ENCODE measurements at regions of chr3 and their contacts with region 1.

Region 1: DNA sequence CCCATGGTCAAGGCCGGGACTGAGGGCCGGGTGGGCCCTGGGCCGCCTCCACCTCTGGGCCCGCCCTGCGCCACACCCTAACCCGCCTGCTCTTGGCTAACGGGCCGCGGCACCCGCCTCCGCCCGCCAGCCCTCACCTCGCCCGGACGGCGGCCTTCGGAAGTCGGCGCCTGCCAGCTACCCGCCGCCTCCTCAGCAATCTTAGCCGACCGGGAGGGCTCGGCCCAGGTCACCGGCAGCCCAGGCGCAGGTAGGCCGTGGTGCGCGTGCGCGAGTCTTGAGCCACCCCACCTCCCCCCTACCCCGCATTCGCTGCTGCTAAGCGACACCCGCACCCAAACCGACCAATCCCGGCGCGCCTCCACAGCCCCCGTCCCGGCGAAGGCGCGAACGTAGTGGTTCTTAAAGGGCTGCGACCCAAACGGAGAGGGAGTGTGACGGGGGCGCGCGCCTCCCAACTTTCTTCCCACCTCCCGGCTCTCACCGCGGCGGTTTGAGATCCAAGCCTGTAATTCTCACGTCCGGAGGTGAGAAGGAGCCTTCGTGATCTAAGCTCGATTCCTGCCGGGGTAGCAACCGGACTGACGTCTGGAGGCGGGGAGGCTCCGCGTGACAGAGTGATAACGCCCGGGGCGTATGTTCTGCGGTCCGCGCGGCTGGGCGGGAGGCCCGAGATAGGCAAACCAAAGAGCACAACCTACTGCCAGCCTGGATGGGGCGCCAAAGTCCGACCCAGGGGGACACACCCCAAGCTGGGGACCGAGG is at the start of gene SEC22C:
- DNase-seq: peak; percentile 97
- ATAC-seq: peak; percentile 94
- H3K4me3 Mint-ChIP-seq: peak within 1 kb of the TSS; percentile 90
- H3K27ac Mint-ChIP-seq: peak within 1 kb of the TSS; percentile 96
- H3K4me1 Mint-ChIP-seq: peaks cover 48% of the 10 kb centered on the region
- H3K27me3 Mint-ChIP-seq: no peaks in the 10 kb centered on the region
- CTCF ChIP-seq: no peak
- total RNA-seq, gene SEC22C: 35.0 to 35.7 TPM

Region 2: GRCh38 chr3:42600111-42600988 is 18.5 kb after region 1 on chr3 and contains the start of gene NKTR:
- CTCF ChIA-PET with region 1: interaction called, 8 read pairs
- POLR2A ChIA-PET with region 1: interaction called, 46 read pairs
- intact Hi-C with region 1: no loop called
- DNase-seq: peak; percentile 99
- ATAC-seq: peak; percentile 88
- H3K4me3 Mint-ChIP-seq: peak within 1 kb of the TSS; percentile 88
- H3K27ac Mint-ChIP-seq: peak within 1 kb of the TSS; percentile 99
- H3K4me1 Mint-ChIP-seq: peaks cover 28% of the 10 kb centered on the region
- H3K27me3 Mint-ChIP-seq: no peaks in the 10 kb centered on the region
- CTCF ChIP-seq: no peak
- total RNA-seq, gene NKTR: 63.4 to 65.9 TPM

Region 3: GRCh38 chr3:42613462-42613861 is 31.6 kb after region 1 on chr3:
- CTCF ChIA-PET with region 1: interaction called, 31 read pairs
- POLR2A ChIA-PET with region 1: no interaction called
- intact Hi-C with region 1: no loop called
- DNase-seq: no peak
- ATAC-seq: no peak
- H3K4me3 Mint-ChIP-seq: no peak overlapping the region
- H3K27ac Mint-ChIP-seq: peak overlapping the region; percentile 8
- H3K4me1 Mint-ChIP-seq: peaks cover 55% of the 10 kb centered on the region
- H3K27me3 Mint-ChIP-seq: no peaks in the 10 kb centered on the region
- CTCF ChIP-seq: peak; percentile 30

Region 4: DNA sequence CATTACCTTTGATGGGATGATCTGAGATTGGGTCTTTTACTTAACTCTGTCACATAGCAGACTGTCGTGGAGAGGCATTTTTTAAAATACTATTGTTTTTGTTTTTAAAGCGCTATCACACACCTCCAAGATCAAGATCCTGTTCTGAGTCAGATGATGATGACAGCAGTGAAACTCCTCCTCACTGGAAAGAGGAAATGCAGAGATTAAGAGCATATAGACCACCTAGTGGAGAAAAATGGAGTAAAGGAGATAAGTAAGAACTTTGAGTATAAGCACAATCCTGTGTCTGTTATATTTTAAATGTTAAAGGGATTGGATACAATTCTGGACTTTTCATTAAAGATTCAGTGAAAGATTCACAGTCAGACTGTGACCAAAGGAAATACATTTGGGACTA is 53.2 kb after region 1 on chr3:
- CTCF ChIA-PET with region 1: interaction called, 17 read pairs
- POLR2A ChIA-PET with region 1: interaction called, 4 read pairs
- intact Hi-C with region 1: no loop called
- DNase-seq: no peak
- ATAC-seq: peak; percentile 68
- H3K4me3 Mint-ChIP-seq: no peak overlapping the region
- H3K27ac Mint-ChIP-seq: no peak overlapping the region
- H3K4me1 Mint-ChIP-seq: peaks cover 5% of the 10 kb centered on the region
- H3K27me3 Mint-ChIP-seq: no peaks in the 10 kb centered on the region
- CTCF ChIP-seq: no peak

Region 5: DNA sequence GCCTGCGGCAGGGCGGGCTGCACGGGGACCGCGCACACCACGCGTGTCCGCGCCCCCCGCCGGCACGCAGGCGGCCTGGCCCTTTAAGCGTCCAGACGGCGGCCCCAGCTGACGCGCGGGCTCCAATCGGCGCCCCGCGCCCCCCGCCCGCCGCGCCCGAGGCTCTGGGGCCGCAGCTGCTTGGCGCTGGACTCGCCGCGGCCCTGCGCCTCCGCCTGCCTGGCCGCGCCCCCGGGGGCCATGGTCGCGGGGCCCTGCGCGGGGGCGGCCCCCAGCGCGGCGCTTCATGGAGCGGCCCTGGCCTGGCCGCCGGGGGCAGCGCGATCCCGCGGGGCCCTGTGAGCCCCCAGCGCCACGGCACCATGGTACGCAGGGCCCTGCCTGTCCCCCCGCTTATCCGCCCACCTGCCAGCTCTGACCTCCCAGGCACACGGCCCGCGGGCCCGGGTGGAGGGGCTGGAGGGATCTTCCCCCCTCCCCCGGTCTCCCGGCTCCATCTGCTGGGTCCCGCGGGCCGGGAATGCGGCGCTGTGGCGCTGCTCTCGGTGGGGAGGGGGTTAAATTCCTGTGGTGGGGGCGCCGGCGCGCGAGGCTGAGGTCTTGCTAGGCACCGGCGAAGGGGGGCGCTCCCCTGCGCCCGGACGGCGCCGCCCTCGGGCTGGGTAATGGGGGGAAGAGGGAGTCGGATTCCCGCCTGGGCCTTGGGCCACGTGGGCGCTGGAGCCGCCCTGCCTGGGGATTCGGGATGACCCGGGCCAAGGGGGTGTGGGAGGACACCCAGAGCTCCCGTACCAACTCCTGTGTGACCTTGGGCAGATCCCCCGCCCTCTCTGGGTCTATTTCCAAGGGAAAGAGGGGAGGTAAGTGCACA is 72.7 kb after region 1 on chr3:
- CTCF ChIA-PET with region 1: no interaction called
- POLR2A ChIA-PET with region 1: no interaction called
- intact Hi-C with region 1: no loop called
- DNase-seq: no peak
- ATAC-seq: peak; percentile 50
- H3K4me3 Mint-ChIP-seq: peak overlapping the region; percentile 47
- H3K27ac Mint-ChIP-seq: no peak overlapping the region
- H3K4me1 Mint-ChIP-seq: peaks cover 6% of the 10 kb centered on the region
- H3K27me3 Mint-ChIP-seq: peaks cover 5% of the 10 kb centered on the region
- CTCF ChIP-seq: no peak

Region 6: GRCh38 chr3:42749753-42750231 is 167.9 kb after region 1 on chr3:
- CTCF ChIA-PET with region 1: interaction called, 10 read pairs
- POLR2A ChIA-PET with region 1: interaction called, 6 read pairs
- intact Hi-C with region 1: loop called (anchors 10 kb)
- DNase-seq: no peak
- ATAC-seq: no peak
- H3K4me3 Mint-ChIP-seq: no peak overlapping the region
- H3K27ac Mint-ChIP-seq: no peak overlapping the region
- H3K4me1 Mint-ChIP-seq: peaks cover 11% of the 10 kb centered on the region
- H3K27me3 Mint-ChIP-seq: no peaks in the 10 kb centered on the region
- CTCF ChIP-seq: no peak

Measured in activated CD8-positive, alpha-beta T cell treated with anti-CD3 and anti-CD28 coated beads for 36 hours (primary cell).